WTC11 (cell line): ENCODE measurements at regions of chr14 and their contacts with region 1.

Region 1: GRCh38 chr14:52961060-52961639 is 10.3 kb upstream of the FERMT2 start:
- DNase-seq: peak; percentile 63
- ATAC-seq: peak; percentile 97
- H3K4me3 Mint-ChIP-seq: no peak overlapping the region
- H3K27ac Mint-ChIP-seq: peak overlapping the region; percentile 66
- H3K4me1 Mint-ChIP-seq: peaks cover 16% of the 10 kb centered on the region
- H3K27me3 Mint-ChIP-seq: no peaks in the 10 kb centered on the region
- CTCF ChIP-seq: peak; percentile 54

Region 2: DNA sequence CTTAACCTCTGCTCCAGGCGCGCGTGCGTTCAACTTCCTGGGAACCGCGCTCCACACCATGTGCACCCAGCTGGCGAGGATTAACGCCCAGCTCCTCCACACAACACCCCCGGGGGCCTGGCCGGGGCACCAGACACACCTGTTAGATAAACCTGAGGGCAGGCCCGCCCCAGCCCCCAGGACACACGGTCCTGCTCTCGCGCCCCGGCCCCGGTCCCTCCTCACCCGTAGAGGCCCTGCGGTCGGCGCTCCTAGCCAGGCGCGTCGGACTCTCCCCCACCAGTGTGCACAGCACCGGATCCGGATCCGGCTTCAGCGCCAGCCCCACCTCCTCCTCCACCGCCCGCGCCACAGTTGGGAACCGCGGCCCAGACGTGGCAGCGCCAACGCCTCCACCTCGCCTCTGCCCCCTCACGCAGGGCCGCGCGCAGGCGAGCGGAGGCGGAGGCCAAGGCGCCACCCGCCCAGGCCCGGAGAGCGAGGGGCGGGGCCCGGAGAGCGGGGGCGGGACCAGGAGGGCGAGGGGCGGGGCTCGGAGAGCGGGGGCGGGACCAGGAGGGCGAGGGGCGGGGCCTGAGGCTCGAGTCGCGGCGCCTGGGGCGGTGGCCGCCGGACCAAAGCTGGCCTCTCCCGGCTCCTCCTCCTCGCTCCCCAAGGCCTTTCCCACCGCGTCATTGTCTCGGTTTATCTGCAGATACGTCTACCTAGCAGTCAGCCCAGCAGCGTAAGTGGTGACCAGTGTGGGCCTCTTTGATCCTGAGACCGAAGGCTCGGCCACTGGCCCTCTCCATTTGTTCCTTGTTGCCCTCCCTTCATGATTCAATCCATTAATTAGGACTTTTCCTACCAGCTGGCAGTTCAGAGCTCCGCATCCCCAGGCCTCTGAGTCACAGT is 169.7 kb before region 1 on chr14 and contains the start of gene GNPNAT1:
- CTCF ChIA-PET with region 1: interaction called, 12 read pairs
- POLR2A ChIA-PET with region 1: no interaction called
- DNase-seq: peak; percentile 88
- ATAC-seq: peak; percentile 90
- H3K4me3 Mint-ChIP-seq: peak within 1 kb of the TSS; percentile 91
- H3K27ac Mint-ChIP-seq: peak within 1 kb of the TSS; percentile 99
- H3K4me1 Mint-ChIP-seq: peaks cover 22% of the 10 kb centered on the region
- H3K27me3 Mint-ChIP-seq: no peaks in the 10 kb centered on the region
- CTCF ChIP-seq: no peak
- total RNA-seq, gene GNPNAT1: 39.5 to 43.5 TPM (median 43.5 TPM) in 3 replicates

Region 3: GRCh38 chr14:52824507-52824906 is 136.6 kb before region 1 on chr14:
- CTCF ChIA-PET with region 1: interaction called, 28 read pairs
- POLR2A ChIA-PET with region 1: no interaction called
- DNase-seq: no peak
- ATAC-seq: no peak
- H3K4me3 Mint-ChIP-seq: no peak overlapping the region
- H3K27ac Mint-ChIP-seq: no peak overlapping the region
- H3K4me1 Mint-ChIP-seq: peaks cover 11% of the 10 kb centered on the region
- H3K27me3 Mint-ChIP-seq: no peaks in the 10 kb centered on the region
- CTCF ChIP-seq: no peak

Region 4: DNA sequence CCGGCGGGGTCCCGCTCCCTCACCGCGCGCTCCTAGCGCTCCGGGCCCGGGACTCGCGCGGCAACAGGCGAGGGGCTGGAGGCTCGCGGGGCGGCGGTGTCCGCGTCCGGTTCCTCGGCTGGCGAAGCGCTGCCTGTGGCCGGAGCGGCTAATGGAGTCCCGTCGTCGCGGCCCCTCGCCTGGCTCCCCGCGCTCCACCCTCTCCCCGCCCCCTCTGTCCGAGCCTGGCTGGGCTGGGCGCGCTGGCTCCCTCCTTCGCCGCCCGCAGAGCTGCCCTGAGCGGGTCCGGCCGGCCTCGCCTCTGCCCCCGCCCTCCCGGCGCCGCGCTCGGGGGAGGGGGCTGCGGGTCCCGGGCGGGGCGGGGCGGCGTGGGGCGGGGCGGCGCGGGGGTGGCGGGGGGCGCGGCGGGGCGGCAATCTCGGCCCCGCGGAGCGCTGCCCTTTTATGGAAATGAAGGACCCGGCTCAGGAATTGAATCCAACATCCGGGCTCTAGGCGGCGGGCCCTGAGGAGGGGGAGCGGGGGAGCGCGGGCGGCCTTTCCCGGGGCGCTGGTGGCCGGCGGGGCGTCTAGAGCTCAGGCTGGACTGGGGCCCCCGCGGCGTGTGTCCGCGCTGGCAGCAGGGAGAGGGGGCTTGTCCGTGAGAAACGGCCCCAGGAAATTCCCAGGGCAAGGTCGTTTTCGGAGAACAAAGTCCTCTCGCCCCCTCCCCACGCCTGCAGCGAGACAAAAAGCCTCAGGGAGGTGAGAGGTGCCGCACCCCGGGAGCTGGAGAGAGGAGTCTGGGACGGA is 10.1 kb before region 1 on chr14 and contains the start of gene FERMT2:
- CTCF ChIA-PET with region 1: interaction called, 15 read pairs
- POLR2A ChIA-PET with region 1: interaction called, 11 read pairs
- DNase-seq: peak; percentile 90
- ATAC-seq: peak; percentile 95
- H3K4me3 Mint-ChIP-seq: peak within 1 kb of the TSS; percentile 99
- H3K27ac Mint-ChIP-seq: peak within 1 kb of the TSS; percentile 98
- H3K4me1 Mint-ChIP-seq: peaks cover 45% of the 10 kb centered on the region
- H3K27me3 Mint-ChIP-seq: no peaks in the 10 kb centered on the region
- CTCF ChIP-seq: no peak
- total RNA-seq, gene FERMT2: 87.8 to 97.7 TPM (median 92.8 TPM) in 3 replicates

Region 5: GRCh38 chr14:52987514-52987913 is 26.4 kb after region 1 on chr14:
- CTCF ChIA-PET with region 1: no interaction called
- POLR2A ChIA-PET with region 1: no interaction called
- DNase-seq: no peak
- ATAC-seq: no peak
- H3K4me3 Mint-ChIP-seq: no peak overlapping the region
- H3K27ac Mint-ChIP-seq: no peak overlapping the region
- H3K4me1 Mint-ChIP-seq: no peaks in the 10 kb centered on the region
- H3K27me3 Mint-ChIP-seq: no peaks in the 10 kb centered on the region
- CTCF ChIP-seq: no peak

Region 6: DNA sequence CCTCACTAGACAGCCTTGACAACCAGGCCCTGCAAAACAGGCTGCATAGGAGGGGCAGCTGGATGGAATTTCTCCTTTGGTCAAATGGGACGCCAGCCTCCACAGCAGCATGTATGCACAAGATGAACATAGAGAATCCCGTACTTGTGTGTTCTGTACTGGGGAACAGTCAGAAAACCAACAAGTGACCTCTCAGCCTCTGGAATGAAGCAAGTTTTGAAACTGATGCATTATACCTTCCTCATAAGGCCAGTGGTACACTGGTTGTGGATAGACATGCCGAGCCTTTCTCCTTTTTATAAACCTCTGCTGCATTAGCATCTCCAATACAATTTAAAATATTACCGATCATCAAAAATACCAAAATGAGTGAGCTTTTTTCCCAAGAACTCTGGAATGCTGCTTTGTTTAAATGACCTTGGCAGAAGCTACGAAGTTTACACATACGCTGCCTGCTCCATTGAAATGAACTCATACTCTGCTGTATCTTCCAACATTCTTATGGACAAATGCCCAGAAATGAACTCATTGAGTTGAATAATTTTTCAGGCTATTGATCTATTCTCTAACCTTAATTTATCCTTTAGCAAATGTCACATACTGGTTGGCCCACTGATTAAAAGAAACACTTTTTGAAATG is 37.3 kb after region 1 on chr14:
- CTCF ChIA-PET with region 1: no interaction called
- POLR2A ChIA-PET with region 1: no interaction called
- DNase-seq: no peak
- ATAC-seq: no peak
- H3K4me3 Mint-ChIP-seq: no peak overlapping the region
- H3K27ac Mint-ChIP-seq: no peak overlapping the region
- H3K4me1 Mint-ChIP-seq: peaks cover 6% of the 10 kb centered on the region
- H3K27me3 Mint-ChIP-seq: no peaks in the 10 kb centered on the region
- CTCF ChIP-seq: no peak

Region 7: GRCh38 chr14:53306267-53306721 is 345.1 kb after region 1 on chr14:
- CTCF ChIA-PET with region 1: interaction called, 14 read pairs
- POLR2A ChIA-PET with region 1: no interaction called
- DNase-seq: peak; percentile 53
- ATAC-seq: peak; percentile 89
- H3K4me3 Mint-ChIP-seq: peak overlapping the region; percentile 45
- H3K27ac Mint-ChIP-seq: no peak overlapping the region
- H3K4me1 Mint-ChIP-seq: peaks cover 6% of the 10 kb centered on the region; the same call in 1 of the 2 replicates
- H3K27me3 Mint-ChIP-seq: no peaks in the 10 kb centered on the region; the same call in none of the 2 replicates
- CTCF ChIP-seq: peak; percentile 60